Upper lobe of right lung (tissue), 1 donor: ENCODE measurements at regions of chr15 and their contacts with region 1.

Region 1: DNA sequence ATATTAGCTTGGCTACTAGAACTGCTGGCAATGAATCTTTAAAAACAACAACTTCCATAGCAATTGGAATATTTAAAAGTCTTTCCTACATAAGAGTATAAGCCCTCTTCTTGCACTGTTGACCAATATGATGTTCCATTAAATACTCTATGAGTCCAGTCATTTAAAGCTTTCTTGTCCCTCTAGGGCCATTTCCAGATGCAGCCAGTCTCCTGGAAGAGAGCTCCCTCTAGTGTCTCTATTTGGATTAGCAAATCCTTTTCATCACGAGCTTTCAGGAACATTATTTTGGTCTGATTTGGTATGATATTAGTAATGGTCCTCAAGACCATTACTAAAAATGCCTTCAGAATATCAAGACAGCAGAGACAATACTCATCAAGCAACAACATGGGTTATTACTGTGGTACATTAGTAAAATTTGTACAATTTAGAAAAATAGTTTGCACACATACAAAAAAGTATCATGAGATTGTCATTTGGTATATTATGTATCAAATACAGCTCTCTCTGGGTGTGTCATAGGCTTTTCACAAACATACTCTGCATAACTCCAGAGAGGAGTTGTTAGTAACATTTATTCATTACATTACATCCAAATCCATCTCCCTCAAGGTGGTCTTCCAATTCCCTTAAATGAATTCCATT is 101.3 kb downstream of the DPH6 start:
- DNase-seq: no peak
- ATAC-seq: peak; percentile 68
- H3K4me3 ChIP-seq: no peak overlapping the region
- H3K27ac ChIP-seq: no peak overlapping the region
- H3K4me1 ChIP-seq: no peaks in the 10 kb centered on the region
- H3K27me3 ChIP-seq: no peaks in the 10 kb centered on the region
- CTCF ChIP-seq: peak; percentile 85

Region 2: GRCh38 chr15:35289024-35289617 is 155.6 kb before region 1 on chr15:
- intact Hi-C with region 1: loop called (anchors 10 kb)
- DNase-seq: no peak
- ATAC-seq: peak; percentile 72
- H3K4me3 ChIP-seq: no peak overlapping the region
- H3K27ac ChIP-seq: no peak overlapping the region
- H3K4me1 ChIP-seq: no peaks in the 10 kb centered on the region
- H3K27me3 ChIP-seq: no peaks in the 10 kb centered on the region
- CTCF ChIP-seq: peak; percentile 75

Region 3: DNA sequence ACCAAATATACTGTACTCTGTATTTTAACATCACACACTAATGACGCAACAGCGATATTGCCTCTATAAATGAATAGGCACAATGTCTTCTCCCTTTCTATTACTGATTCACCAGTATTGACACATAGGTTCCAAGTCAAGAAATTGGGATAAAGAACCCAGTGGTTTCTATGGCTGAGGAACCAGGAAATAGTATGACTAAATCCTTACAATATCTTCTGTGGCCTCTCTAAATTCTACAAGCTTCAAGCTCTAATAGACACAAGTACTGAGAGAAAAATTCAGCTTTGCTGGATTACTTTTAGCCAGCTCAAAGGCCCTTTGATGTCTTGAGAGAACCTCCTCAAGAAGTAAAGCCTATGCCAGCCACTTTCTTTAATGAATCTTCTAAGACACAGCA is 61.2 kb before region 1 on chr15:
- intact Hi-C with region 1: no loop called
- DNase-seq: no peak
- ATAC-seq: no peak
- H3K4me3 ChIP-seq: no peak overlapping the region
- H3K27ac ChIP-seq: no peak overlapping the region
- H3K4me1 ChIP-seq: no peaks in the 10 kb centered on the region
- H3K27me3 ChIP-seq: no peaks in the 10 kb centered on the region
- CTCF ChIP-seq: no peak

Region 4: DNA sequence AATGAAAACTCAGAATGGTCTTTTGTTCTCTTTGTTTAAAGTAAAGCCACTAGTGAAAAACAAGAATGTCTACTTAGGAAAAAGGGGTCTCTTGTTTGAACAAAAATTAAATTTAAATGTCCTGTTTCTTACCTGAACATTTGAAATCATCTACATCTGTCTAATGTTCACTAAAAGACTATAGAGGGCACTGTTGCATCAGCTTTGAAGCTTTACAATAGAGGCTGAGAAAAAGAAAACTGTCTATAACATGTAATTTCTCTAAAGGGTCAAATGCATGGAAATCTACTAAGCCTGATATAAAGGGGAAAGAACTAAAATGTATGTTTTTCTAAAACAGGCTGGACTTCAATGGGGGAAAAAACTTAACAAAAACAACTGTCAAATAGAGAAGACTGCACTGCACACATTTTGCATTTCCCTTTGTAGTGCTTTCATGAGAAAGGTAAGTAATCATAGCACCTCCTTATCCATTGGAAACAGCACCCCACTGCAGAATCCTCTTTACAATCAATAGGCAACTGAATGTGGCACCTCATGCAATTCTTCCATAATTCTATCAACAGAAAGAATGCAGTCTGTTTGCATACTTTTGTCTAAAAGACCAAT is 75.0 kb after region 1 on chr15:
- intact Hi-C with region 1: no loop called
- DNase-seq: no peak
- ATAC-seq: peak; percentile 60
- H3K4me3 ChIP-seq: no peak overlapping the region
- H3K27ac ChIP-seq: no peak overlapping the region
- H3K4me1 ChIP-seq: peaks cover 7% of the 10 kb centered on the region
- H3K27me3 ChIP-seq: no peaks in the 10 kb centered on the region
- CTCF ChIP-seq: peak; percentile 72

Region 5: GRCh38 chr15:35560870-35561269 is 116.2 kb after region 1 on chr15:
- intact Hi-C with region 1: no loop called
- DNase-seq: no peak
- ATAC-seq: no peak
- H3K4me3 ChIP-seq: no peak overlapping the region
- H3K27ac ChIP-seq: no peak overlapping the region
- H3K4me1 ChIP-seq: peaks cover 8% of the 10 kb centered on the region
- H3K27me3 ChIP-seq: no peaks in the 10 kb centered on the region
- CTCF ChIP-seq: no peak

Region 6: GRCh38 chr15:35857567-35858226 is 413.0 kb after region 1 on chr15:
- intact Hi-C with region 1: no loop called
- DNase-seq: no peak
- ATAC-seq: no peak
- H3K4me3 ChIP-seq: no peak overlapping the region
- H3K27ac ChIP-seq: no peak overlapping the region
- H3K4me1 ChIP-seq: no peaks in the 10 kb centered on the region
- H3K27me3 ChIP-seq: no peaks in the 10 kb centered on the region
- CTCF ChIP-seq: no peak